ENCODE measurements at regions of chr2 and their contacts with region 1.

Region 1: GRCh38 chr2:160210599-160211138 is 10.6 kb upstream of the ITGB6 start:
- DNase-seq: peak; percentile 79
- H3K4me3 Mint-ChIP-seq: no peak overlapping the region
- H3K27ac Mint-ChIP-seq: no peak overlapping the region
- H3K4me1 Mint-ChIP-seq: peaks cover 7% of the 10 kb centered on the region
- H3K27me3 Mint-ChIP-seq: peaks cover 13% of the 10 kb centered on the region

Region 2: DNA sequence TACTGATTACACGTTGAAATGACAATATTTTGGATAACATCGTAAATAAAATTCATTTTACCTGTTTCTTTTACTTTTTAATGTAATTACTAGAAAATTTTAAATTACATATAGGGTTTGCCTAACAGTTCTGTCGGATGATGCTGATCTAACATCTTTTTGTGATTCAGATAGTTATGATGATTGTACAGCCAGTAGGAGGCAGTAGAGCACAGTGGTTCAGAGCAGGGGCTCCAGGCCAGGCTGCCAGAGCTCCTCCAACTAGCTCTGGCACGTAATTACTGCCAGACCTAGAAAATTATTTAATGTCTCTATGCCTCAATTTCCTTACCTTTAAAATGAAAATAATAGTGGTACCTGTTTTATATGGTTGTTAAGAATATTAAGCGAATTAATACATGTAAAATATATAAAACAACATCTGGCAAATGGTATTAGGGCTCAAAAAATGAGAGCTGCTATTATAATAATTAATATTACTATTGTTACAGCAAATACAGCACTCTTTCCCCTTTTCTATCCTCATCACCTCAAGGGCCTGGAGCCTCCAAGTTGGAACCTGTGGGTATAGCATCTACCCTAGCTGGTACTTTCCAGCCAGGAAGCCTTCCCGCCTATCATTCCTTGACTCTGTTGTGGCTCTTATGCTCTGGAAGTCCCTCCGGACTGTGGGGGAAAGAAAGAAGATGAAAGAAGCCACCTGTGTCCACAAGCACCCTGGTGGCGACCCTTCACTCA is 100.6 kb before region 1 on chr2:
- CTCF ChIA-PET with region 1: interaction called, 44 read pairs
- DNase-seq: peak; percentile 62
- H3K4me3 Mint-ChIP-seq: no peak overlapping the region
- H3K27ac Mint-ChIP-seq: no peak overlapping the region
- H3K4me1 Mint-ChIP-seq: no peaks in the 10 kb centered on the region
- H3K27me3 Mint-ChIP-seq: peaks cover 4% of the 10 kb centered on the region

Region 3: GRCh38 chr2:160228106-160228916 is 17.6 kb after region 1 on chr2:
- CTCF ChIA-PET with region 1: no interaction called
- DNase-seq: no peak
- H3K4me3 Mint-ChIP-seq: no peak overlapping the region
- H3K27ac Mint-ChIP-seq: no peak overlapping the region
- H3K4me1 Mint-ChIP-seq: peaks cover 15% of the 10 kb centered on the region
- H3K27me3 Mint-ChIP-seq: peaks cover 15% of the 10 kb centered on the region

Region 4: DNA sequence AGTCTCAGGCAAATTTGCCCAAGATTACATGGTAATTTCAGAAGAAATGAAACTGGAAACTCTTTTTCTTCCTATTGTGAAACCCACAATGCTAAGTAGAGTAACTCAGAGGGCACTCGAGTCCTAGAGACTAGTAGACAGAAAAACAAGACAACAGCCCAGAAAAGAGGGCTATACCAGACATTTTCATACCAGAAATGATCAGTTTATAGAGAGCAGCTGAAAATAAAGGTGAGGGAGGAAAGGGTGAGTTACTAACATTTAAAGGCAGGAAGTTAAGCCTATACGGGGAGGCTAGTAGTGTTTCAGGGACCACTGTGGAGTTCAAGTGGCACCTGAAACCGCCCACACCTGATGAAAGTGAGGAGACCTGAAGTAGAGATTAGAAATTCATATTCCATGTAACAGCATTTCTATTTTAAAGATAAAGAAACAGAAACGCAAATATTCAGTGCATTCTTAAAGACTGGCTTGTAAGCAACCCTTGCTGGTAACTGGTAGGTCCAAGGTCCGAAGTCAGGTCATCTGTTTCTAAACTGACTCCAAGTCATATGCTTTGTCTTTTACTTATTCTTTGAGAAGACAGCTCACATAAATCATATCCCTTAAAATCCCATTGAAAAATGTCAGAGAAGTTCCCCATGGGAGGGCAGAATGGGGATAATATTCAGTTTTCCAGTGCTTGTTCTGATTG is 134.5 kb after region 1 on chr2:
- CTCF ChIA-PET with region 1: no interaction called
- DNase-seq: no peak
- H3K4me3 Mint-ChIP-seq: no peak overlapping the region
- H3K27ac Mint-ChIP-seq: no peak overlapping the region
- H3K4me1 Mint-ChIP-seq: peaks cover 33% of the 10 kb centered on the region
- H3K27me3 Mint-ChIP-seq: peaks cover 4% of the 10 kb centered on the region